Right ventricle myocardium inferior (tissue), 1 donor: ENCODE measurements at regions of chr17 and their contacts with region 1.

Region 1: DNA sequence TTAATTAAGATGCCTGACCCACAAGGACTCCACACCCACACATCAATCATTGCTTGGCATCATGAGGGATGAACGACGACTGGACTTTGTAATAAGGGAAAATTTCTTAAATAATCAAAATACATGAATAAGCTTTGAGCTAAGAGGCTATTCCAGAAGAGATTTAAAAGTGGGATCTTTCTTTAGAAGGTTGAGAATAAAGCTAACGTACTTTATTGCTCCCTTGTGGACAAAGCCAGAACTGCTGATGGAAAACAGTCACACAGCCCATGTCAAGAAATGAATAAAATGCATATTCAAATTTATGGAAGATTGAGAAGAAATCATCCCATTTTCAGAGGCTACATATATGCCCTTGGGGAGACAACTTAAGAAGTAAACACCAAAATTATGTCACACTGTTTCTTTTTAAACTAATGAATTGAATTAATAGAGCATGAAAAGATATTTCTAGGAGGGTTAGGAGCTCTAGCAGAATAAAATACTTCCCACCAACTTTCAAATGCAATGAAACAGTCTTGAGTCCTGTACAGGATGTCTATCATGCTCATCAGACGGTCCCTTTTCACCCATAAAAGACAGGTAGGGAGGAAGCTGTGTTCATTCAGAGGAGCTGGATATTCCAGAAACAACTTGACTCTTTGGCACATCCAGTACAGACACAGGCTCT is 60.2 kb upstream of the PHOSPHO1 start:
- DNase-seq: no peak
- ATAC-seq: no peak

Region 2: GRCh38 chr17:48678141-48678971 is 612.5 kb before region 1 on chr17:
- intact Hi-C with region 1: loop called (anchors 10 kb)
- DNase-seq: peak; percentile 77
- ATAC-seq: peak; percentile 84

Region 3: DNA sequence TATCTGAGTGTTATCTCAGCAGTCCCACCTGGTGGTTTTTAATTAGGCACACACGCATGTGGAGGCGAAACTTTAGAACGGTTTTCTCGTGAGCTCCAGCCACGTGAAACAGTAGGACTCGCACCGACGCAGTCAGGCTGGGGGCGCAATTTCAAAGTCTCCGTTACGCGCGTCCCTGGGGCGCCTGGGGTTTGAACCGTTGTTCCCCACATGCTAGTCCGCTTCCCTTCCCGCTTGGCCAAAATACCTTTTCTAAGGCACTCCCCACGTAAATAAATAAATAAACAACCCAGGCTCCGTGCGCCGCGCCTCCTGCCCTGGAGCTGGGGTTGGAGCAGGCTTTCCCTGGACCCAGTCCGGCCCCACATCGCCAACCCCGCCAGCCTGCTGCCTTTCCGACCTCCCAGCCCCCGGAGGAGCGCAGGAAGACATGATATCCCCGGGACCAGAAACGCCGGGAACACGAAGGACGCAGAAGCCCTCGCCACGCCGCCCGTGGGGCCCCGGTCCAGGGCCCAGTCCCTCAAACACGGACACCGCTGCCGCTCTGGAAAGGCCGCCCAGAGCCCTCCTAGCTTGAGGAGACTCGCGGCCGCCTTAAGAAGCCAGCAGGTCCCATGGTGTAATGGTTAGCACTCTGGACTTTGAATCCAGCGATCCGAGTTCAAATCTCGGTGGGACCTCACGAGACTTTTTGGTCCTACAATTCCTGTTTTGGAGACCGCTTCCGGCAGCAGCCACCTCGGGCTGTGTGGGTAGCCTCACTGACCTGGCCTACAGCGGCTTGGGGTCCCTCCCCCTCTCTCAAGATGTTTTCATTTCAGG is 98.7 kb before region 1 on chr17:
- intact Hi-C with region 1: loop called (anchors 5 kb)
- DNase-seq: peak; percentile 91
- ATAC-seq: peak; percentile 93

Region 4: DNA sequence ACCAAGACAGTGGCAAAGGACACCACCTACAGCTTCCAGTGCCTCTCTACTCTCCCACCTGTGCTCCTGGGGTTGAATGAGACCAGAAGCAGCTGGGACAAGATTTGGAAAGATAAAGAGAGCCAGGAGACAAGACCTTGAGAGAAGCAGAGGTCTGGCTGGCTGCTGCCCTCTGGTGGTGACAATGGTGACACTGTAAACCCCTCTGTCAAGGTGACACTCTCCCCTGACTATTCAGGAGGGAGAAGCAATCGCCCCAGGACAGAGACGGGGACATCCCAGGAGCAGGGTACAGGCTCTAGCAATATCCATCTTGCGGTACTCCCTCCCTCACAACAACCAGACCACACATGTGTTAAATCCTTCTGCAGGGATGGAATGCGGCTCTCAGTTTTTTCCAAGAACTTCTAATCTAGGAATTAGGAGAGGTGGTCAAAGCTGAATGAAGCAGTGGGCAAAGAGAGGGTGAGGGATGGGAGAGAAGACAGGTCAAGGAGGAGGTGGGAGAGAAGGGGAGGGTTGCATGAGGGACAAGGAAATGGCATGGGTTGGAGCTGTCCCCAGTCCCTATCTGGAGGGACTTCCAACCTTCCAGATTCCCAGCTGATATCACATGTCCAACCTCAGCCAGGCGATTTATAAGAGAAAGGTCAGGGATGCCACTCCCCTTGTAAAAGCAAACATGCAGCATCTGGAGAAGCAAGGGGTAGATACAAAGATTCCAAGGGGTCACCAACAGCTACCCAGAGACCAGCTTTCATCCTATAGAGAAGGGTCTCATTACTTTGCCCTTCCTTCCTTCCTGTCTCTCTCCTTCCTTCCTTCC is 63.2 kb before region 1 on chr17:
- intact Hi-C with region 1: loop called (anchors 5 kb)
- DNase-seq: peak; percentile 87
- ATAC-seq: peak; percentile 47